IMR-90 (cell line): ENCODE measurements at regions of chr2 and their contacts with region 1.

Region 1: DNA sequence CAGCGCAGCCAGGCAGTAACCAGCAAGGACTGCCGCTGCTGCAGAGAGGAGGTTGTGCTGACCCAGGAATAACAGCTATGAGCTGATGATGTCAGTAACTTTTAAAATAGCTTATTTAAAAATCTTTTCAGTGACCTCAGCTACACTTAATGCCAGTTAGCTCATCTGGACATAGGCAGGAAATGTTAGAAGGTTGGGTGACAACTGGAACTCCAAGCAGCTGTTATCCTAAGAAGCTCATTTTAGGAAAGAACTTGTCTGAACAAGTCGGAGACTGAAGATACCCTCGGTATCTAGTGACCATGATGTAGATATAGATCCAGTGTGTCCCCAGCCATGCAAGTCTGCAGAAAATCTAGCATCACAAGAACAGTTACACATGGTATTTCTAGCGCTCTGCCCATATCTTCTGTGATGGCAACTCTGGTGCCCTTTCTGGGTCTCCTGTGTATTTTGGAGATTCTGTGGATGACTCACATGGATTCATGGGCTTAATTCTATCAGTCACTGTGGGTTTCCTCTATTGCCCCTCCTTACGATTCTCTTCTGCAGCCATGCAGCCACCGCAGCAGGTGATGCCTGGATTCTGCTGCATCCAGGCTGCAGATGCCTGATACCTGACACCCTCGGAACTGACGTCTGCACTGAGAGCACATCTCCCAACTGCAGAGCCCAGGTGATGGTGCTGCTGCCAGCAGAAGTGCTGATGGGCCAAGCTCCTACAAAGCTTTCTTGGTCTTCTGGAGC is 19.8 kb upstream of the PLEK start:
- DNase-seq: peak; percentile 10
- ATAC-seq: no peak
- H3K4me3 ChIP-seq: no peak overlapping the region
- H3K27ac ChIP-seq: no peak overlapping the region
- H3K4me1 ChIP-seq: no peaks in the 10 kb centered on the region
- H3K27me3 ChIP-seq: no peaks in the 10 kb centered on the region
- CTCF ChIP-seq: no peak
- POLR2A ChIP-seq: no peak
- RAD21 ChIP-seq: no peak

Region 2: DNA sequence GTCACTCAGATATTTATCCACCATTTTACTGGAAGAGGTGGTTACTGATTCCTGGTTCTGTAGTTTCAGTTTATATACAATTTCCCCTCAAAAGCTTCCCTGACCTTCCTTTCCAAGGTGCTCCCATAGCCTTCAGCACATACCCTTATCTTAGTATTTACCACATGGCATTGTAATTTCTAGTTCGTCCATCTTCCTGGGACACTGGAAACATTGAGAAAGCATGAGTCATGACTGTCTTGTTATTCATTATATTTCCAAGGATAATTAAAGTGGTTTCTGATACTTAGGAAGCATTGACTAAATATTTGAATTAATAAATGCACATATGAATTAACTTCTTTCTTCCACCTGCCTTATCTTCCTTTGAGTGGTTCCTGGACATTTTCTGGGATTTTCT is 744.4 kb before region 1 on chr2:
- CTCF ChIA-PET with region 1: no interaction called
- POLR2A ChIA-PET with region 1: no interaction called
- dilution Hi-C with region 1: no loop called
- in situ Hi-C with region 1: no loop called
- intact Hi-C with region 1: no loop called
- DNase-seq: peak; percentile 73
- ATAC-seq: peak; percentile 70
- H3K4me3 ChIP-seq: no peak overlapping the region
- H3K27ac ChIP-seq: no peak overlapping the region
- H3K4me1 ChIP-seq: peaks cover 7% of the 10 kb centered on the region; the same call in 1 of the 2 replicates
- H3K27me3 ChIP-seq: no peaks in the 10 kb centered on the region
- CTCF ChIP-seq: no peak
- POLR2A ChIP-seq: no peak
- RAD21 ChIP-seq: no peak

Region 3: DNA sequence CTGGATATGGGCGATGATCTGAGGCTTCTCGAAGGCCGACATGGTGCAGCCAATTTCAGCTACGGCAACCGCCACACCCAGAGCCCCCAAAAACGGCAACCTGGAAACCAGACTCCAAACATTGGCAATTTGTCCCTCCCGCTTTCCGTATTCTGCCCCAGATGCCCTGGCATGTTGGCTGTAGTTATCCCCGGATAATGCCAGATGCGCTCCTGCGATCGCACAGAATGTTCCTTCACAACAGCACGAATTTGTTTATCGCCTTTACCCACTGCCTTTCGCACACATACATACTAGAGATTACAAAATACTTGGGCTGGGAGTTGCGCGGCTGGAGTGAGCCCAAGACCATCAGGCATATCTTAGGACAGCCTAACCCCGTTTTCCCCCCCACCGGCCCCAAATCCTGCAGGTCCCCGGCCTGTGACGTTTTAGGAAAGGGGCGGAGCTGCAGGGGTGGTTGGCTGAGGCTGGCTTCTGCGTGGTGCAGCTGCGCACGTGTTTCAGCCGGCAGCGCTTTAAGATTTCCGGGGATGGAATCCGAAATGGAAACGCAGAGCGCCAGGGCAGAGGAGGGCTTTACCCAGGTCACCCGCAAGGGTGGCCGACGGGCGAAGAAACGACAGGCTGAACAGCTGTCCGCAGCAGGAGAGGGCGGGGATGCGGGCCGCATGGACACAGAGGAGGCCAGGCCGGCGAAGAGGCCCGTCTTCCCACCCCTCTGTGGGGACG is 187.7 kb before region 1 on chr2 and contains the start of gene PNO1:
- CTCF ChIA-PET with region 1: no interaction called
- POLR2A ChIA-PET with region 1: no interaction called
- dilution Hi-C with region 1: no loop called
- in situ Hi-C with region 1: no loop called
- intact Hi-C with region 1: no loop called
- DNase-seq: peak; percentile 95
- ATAC-seq: peak; percentile 98
- H3K4me3 ChIP-seq: peak within 1 kb of the TSS; percentile 75
- H3K27ac ChIP-seq: peak within 1 kb of the TSS; percentile 89
- H3K4me1 ChIP-seq: no peaks in the 10 kb centered on the region
- H3K27me3 ChIP-seq: no peaks in the 10 kb centered on the region
- CTCF ChIP-seq: no peak
- POLR2A ChIP-seq: peak; percentile 91
- RAD21 ChIP-seq: peak; percentile 11; the same call in 1 of the 2 replicates
- total RNA-seq, gene PNO1: 14.7 and 25.8 TPM in 2 replicates

Region 4: GRCh38 chr2:68367953-68368653 is 22.8 kb after region 1 on chr2:
- CTCF ChIA-PET with region 1: no interaction called
- POLR2A ChIA-PET with region 1: no interaction called
- dilution Hi-C with region 1: no loop called
- in situ Hi-C with region 1: no loop called
- intact Hi-C with region 1: loop called (anchors 1 kb)
- DNase-seq: no peak
- ATAC-seq: peak; percentile 17; the same call in 1 of the 2 replicates
- H3K4me3 ChIP-seq: no peak overlapping the region
- H3K27ac ChIP-seq: no peak overlapping the region
- H3K4me1 ChIP-seq: no peaks in the 10 kb centered on the region
- H3K27me3 ChIP-seq: peaks cover 18% of the 10 kb centered on the region
- CTCF ChIP-seq: no peak
- POLR2A ChIP-seq: no peak
- RAD21 ChIP-seq: no peak

Region 5: GRCh38 chr2:68487773-68488355 is 142.6 kb after region 1 on chr2:
- CTCF ChIA-PET with region 1: no interaction called
- POLR2A ChIA-PET with region 1: no interaction called
- dilution Hi-C with region 1: no loop called
- in situ Hi-C with region 1: no loop called
- intact Hi-C with region 1: no loop called
- DNase-seq: peak; percentile 53
- ATAC-seq: peak; percentile 75; the same call in 1 of the 2 replicates
- H3K4me3 ChIP-seq: no peak overlapping the region
- H3K27ac ChIP-seq: no peak overlapping the region
- H3K4me1 ChIP-seq: 0 out of 2 replicates have a peak, but pooled peaks cover 2% of the 10 kb centered on the region
- H3K27me3 ChIP-seq: no peaks in the 10 kb centered on the region
- CTCF ChIP-seq: peak; percentile 56
- POLR2A ChIP-seq: no peak
- RAD21 ChIP-seq: peak; percentile 51

Region 6: GRCh38 chr2:68620772-68621171 is 275.5 kb after region 1 on chr2:
- CTCF ChIA-PET with region 1: no interaction called
- POLR2A ChIA-PET with region 1: no interaction called
- dilution Hi-C with region 1: no loop called
- in situ Hi-C with region 1: no loop called
- intact Hi-C with region 1: no loop called
- DNase-seq: no peak
- ATAC-seq: no peak
- H3K4me3 ChIP-seq: no peak overlapping the region
- H3K27ac ChIP-seq: no peak overlapping the region
- H3K4me1 ChIP-seq: no peaks in the 10 kb centered on the region
- H3K27me3 ChIP-seq: no peaks in the 10 kb centered on the region; the same call in 1 of the 2 replicates
- CTCF ChIP-seq: no peak
- POLR2A ChIP-seq: no peak
- RAD21 ChIP-seq: no peak